Sigmoid colon (tissue), 7 donors: ENCODE measurements at regions of chr10 and their contacts with region 1.

Region 1: GRCh38 chr10:123858077-123858681 is 33.4 kb downstream of the CPXM2 start:
- DNase-seq: peak; percentile 82
- H3K4me3 ChIP-seq: no peak overlapping the region
- H3K27ac ChIP-seq: peak overlapping the region; percentile 91 to 97 (median 97)
- H3K4me1 ChIP-seq: peaks cover 0 to 90% (median 84%) of the 10 kb centered on the region in 4 donors
- H3K27me3 ChIP-seq: no peaks in the 10 kb centered on the region
- CTCF ChIP-seq: no peak
- EP300 ChIP-seq: peak in 1 of 4 donors; percentile 31
- POLR2A ChIP-seq: peak in 1 of 2 donors; percentile 28

Region 2: DNA sequence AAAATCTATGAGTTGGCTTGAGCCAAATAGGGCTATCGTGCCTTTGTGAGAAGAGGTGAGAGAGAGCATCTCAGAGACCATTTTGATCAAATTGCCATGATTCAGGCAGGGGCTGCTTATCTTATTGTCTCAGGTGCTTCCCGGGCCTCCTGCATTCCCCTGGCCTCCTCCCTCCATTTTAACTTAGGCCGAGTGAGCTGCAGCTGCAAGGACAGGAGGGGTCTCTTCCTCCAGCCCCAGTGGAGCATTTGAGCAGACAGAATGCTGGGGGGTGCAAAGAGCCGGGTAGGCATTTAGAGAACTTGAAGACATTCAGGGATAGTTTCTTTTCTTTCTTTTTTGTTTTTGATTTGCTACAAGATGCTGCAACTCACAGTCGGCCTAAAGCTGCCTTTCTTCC is 645.0 kb before region 1 on chr10:
- intact Hi-C with region 1: no loop called
- DNase-seq: no peak
- H3K4me3 ChIP-seq: no peak overlapping the region
- H3K27ac ChIP-seq: no peak overlapping the region
- H3K4me1 ChIP-seq: no peaks in the 10 kb centered on the region
- H3K27me3 ChIP-seq: no peaks in the 10 kb centered on the region
- CTCF ChIP-seq: no peak
- EP300 ChIP-seq: no peak
- POLR2A ChIP-seq: no peak

Region 3: DNA sequence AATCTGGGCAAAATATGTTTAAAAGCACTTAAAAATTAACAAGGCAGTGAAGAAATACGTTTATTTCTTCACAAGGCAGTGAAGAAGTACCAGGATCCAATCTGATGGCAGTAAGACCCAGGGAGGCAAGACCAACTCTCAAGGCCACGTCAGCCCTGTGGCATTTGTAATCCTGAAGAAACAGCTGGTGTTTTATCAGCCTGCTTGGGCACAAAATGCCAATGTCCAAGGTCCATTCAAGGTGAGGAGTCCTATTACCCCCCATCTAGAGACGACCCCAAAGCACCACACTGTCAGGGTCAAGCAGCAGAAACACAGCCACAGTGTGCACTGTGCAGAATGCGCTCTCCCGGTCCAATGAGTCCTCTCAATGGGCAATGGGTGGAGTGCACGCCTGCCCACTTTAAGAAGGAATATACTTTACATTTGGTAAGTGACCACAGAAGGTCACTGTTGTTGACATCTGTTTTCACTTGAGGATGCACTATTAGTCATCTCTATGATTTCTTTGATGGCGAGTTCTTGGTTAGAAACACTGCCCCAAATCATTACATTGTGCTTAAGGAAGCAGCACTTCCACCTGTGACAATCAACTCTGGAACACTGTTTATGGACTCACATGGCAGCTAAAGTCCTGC is 20.6 kb after region 1 on chr10:
- intact Hi-C with region 1: no loop called
- DNase-seq: no peak
- H3K4me3 ChIP-seq: no peak overlapping the region
- H3K27ac ChIP-seq: peak overlapping the region; percentile 10 to 99 (median 98)
- H3K4me1 ChIP-seq: peaks cover 0 to 60% (median 52%) of the 10 kb centered on the region in 4 donors
- H3K27me3 ChIP-seq: no peaks in the 10 kb centered on the region
- CTCF ChIP-seq: no peak
- EP300 ChIP-seq: no peak
- POLR2A ChIP-seq: no peak

Region 4: GRCh38 chr10:123891133-123892071 is 33.2 kb after region 1 on chr10 and contains the start of gene CPXM2:
- intact Hi-C with region 1: loop called (anchors 5 kb)
- DNase-seq: no peak
- H3K4me3 ChIP-seq: peak within 1 kb of the TSS; percentile 64 to 87 (median 84)
- H3K27ac ChIP-seq: peak within 1 kb of the TSS; percentile 96 to 99 (median 98)
- H3K4me1 ChIP-seq: peaks cover 2 to 72% (median 56%) of the 10 kb centered on the region in 4 donors
- H3K27me3 ChIP-seq: peaks cover 0 to 6% (median 0%) of the 10 kb centered on the region in 3 donors
- CTCF ChIP-seq: no peak
- EP300 ChIP-seq: no peak
- POLR2A ChIP-seq: peak in 1 of 2 donors; percentile 24
- total RNA-seq, gene CPXM2: 48.5 to 153 (median 106) TPM

Region 5: DNA sequence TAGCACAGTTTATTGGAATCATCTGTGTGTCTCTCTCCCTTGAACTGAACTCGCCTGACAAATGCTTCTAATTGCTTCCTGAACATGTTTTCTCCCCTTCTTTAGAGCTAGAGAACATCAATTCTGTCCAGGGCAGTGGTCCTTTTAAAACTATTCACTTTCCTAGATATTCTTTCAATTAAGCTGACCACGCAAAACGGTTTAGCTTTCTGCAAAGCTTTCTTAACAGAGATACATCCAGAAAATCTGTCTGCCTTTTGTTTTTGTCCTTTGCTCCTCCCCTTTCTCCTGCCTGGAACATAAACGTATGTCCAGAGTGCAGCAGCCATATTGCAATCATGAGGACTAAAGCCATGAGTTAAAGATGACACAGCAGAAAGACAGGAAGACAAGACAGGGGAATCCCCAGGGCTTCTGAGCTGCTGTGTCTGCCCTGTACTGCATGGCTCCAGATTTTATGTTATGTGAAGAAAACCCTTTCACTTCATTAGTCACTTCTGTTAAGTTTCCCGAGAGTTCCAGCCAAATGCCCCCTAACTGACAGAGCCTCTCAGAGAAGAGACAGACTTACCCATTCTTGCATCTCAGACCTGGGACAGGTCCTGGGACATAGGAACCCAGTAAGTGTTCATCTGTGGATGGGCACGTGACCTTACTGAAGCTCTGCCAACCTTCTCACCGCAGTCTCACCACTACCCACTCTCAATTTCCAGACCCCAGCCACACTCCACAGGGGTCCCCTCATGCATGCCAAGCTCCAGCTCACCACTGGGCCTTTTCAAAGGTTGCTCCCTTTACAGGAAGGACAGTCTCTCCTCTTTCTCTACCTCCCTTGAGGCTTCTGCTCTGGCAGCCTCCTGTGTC is 68.5 kb after region 1 on chr10:
- intact Hi-C with region 1: no loop called
- DNase-seq: no peak
- H3K4me3 ChIP-seq: no peak overlapping the region
- H3K27ac ChIP-seq: no peak overlapping the region
- H3K4me1 ChIP-seq: peaks cover 0 to 12% (median 9%) of the 10 kb centered on the region in 4 donors
- H3K27me3 ChIP-seq: no peaks in the 10 kb centered on the region
- CTCF ChIP-seq: no peak
- EP300 ChIP-seq: no peak
- POLR2A ChIP-seq: no peak